CD4-positive, alpha-beta T cell (primary cell): ENCODE measurements at regions of chr6 and their contacts with region 1.

Region 1: GRCh38 chr6:31351401-31352309 is 5.3 kb downstream of the HLA-B start:
- DNase-seq: peak in 6 of 14 experiments; percentile 12 to 78 (median 43)
- ATAC-seq: peak; percentile 43
- H3K4me3 ChIP-seq: no peak overlapping the region
- H3K4me3 Mint-ChIP-seq: peak overlapping the region; percentile 68
- H3K27ac ChIP-seq: peak overlapping the region in 1 of 2 donors; percentile 4
- H3K27ac Mint-ChIP-seq: peak overlapping the region; percentile 100
- H3K4me1 ChIP-seq: peaks cover 48% of the 10 kb centered on the region
- H3K4me1 Mint-ChIP-seq: peaks cover 58% of the 10 kb centered on the region
- H3K27me3 ChIP-seq: no peaks in the 10 kb centered on the region
- H3K27me3 Mint-ChIP-seq: peaks cover 5% of the 10 kb centered on the region
- CTCF ChIP-seq: no peak

Region 2: GRCh38 chr6:31203345-31203979 is 148.2 kb before region 1 on chr6:
- CTCF ChIA-PET with region 1: no interaction called
- POLR2A ChIA-PET with region 1: interaction called, 52 read pairs
- intact Hi-C with region 1: no loop called
- DNase-seq: peak in 12 of 14 experiments; percentile 28 to 87 (median 52)
- ATAC-seq: peak; percentile 71
- H3K4me3 ChIP-seq: peak overlapping the region; percentile 68
- H3K4me3 Mint-ChIP-seq: peak overlapping the region; percentile 87
- H3K27ac ChIP-seq: peak overlapping the region; percentile 71 to 73
- H3K27ac Mint-ChIP-seq: peak overlapping the region; percentile 93
- H3K4me1 ChIP-seq: peaks cover 69% of the 10 kb centered on the region
- H3K4me1 Mint-ChIP-seq: peaks cover 65% of the 10 kb centered on the region
- H3K27me3 ChIP-seq: no peaks in the 10 kb centered on the region
- H3K27me3 Mint-ChIP-seq: no peaks in the 10 kb centered on the region
- CTCF ChIP-seq: no peak

Region 3: DNA sequence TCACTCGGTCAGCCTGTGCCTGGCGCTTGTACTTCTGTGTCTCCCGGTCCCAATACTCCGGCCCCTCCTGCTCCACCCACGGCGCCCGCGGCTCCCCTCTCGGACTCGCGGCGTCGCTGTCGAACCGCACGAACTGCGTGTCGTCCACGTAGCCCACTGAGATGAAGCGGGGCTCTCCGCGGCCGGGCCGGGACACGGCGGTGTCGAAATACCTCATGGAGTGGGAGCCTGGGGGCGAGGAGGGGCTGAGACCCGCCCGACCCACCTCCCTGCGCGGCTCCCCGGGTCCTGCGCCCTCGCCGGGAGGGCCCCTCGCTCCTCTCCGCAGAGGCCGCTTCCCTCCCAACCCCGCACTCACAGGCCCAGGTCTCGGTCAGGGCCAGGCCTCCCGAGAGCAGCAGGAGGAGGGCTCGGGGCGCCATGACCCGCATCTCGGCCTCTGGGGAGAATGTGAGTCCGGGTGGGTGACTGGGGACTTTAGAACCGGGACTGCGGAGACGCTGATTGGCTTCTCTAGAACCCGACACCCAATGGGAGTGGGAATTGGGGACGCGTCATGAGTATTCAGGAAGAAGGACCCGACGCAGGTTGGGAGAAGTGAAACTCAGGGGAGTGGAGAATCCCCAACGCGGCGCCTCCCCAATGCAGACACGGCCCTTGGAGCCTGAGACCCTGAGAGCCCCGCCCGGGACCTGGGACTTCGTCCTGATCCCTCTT is 79.9 kb before region 1 on chr6 and contains the start of gene HLA-C:
- CTCF ChIA-PET with region 1: no interaction called
- POLR2A ChIA-PET with region 1: interaction called, 41 read pairs
- intact Hi-C with region 1: loop called (anchors 1 to 2 kb)
- DNase-seq: peak; percentile 80 to 98 (median 89)
- ATAC-seq: peak; percentile 89
- H3K4me3 ChIP-seq: peak within 1 kb of the TSS; percentile 79
- H3K4me3 Mint-ChIP-seq: peak within 1 kb of the TSS; percentile 98
- H3K27ac ChIP-seq: peak within 1 kb of the TSS; percentile 96 to 98
- H3K27ac Mint-ChIP-seq: peak within 1 kb of the TSS; percentile 100
- H3K4me1 ChIP-seq: peaks cover 54% of the 10 kb centered on the region
- H3K4me1 Mint-ChIP-seq: peaks cover 65% of the 10 kb centered on the region
- H3K27me3 ChIP-seq: no peaks in the 10 kb centered on the region
- H3K27me3 Mint-ChIP-seq: no peaks in the 10 kb centered on the region
- CTCF ChIP-seq: no peak
- total RNA-seq, gene HLA-C: 1,977 to 1,996 TPM

Region 4: DNA sequence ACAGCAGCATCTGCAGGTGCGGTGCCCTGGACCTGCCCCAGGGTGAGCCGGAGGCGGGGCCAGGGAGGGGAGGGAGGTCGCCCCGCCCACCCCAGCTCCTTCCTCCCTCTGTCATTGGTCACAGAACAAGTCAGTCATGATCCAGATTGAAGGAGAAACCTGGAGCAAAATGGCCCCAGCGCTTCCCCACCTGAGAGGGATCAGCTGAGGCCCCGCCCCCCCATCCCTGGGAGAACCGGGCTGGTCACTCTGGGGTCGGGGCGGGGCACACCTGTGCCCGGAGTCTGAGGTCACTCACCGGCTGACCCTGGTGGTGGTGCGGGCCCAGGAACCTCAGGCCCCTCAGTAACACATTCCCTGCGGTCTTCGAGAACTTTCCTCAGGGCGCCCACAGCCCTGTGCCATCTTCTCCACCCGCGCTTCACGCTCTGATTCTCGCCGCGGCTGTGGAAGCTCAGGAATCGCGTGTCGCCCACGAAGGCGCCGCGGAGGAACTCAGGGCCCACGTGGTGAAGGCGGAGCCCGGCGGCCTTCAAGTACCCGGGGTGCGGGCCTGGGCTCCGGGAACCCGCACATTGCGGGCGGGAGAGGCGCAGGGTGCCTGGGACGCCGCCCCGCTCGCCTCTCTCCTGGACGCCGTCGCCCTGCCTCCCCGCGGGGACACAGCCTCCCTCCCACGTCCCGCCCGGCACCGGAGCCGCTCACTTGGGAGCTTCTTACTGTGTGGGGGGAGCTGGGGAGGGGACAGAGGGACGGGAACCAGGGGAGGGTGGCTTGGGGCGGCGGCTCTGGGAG is 43.4 kb before region 1 on chr6:
- CTCF ChIA-PET with region 1: no interaction called
- POLR2A ChIA-PET with region 1: interaction called, 6 read pairs
- intact Hi-C with region 1: loop called in 1 of 2 experiments (anchors 2 kb)
- DNase-seq: peak; percentile 58 to 90 (median 68)
- ATAC-seq: peak; percentile 95
- H3K4me3 ChIP-seq: peak overlapping the region; percentile 73
- H3K4me3 Mint-ChIP-seq: peak overlapping the region; percentile 95
- H3K27ac ChIP-seq: no peak overlapping the region
- H3K27ac Mint-ChIP-seq: peak overlapping the region; percentile 76
- H3K4me1 ChIP-seq: peaks cover 18% of the 10 kb centered on the region
- H3K4me1 Mint-ChIP-seq: no peaks in the 10 kb centered on the region
- H3K27me3 ChIP-seq: peaks cover 0 to 3% of the 10 kb centered on the region in 2 experiments
- H3K27me3 Mint-ChIP-seq: peaks cover 14% of the 10 kb centered on the region
- CTCF ChIP-seq: no peak

Region 5: DNA sequence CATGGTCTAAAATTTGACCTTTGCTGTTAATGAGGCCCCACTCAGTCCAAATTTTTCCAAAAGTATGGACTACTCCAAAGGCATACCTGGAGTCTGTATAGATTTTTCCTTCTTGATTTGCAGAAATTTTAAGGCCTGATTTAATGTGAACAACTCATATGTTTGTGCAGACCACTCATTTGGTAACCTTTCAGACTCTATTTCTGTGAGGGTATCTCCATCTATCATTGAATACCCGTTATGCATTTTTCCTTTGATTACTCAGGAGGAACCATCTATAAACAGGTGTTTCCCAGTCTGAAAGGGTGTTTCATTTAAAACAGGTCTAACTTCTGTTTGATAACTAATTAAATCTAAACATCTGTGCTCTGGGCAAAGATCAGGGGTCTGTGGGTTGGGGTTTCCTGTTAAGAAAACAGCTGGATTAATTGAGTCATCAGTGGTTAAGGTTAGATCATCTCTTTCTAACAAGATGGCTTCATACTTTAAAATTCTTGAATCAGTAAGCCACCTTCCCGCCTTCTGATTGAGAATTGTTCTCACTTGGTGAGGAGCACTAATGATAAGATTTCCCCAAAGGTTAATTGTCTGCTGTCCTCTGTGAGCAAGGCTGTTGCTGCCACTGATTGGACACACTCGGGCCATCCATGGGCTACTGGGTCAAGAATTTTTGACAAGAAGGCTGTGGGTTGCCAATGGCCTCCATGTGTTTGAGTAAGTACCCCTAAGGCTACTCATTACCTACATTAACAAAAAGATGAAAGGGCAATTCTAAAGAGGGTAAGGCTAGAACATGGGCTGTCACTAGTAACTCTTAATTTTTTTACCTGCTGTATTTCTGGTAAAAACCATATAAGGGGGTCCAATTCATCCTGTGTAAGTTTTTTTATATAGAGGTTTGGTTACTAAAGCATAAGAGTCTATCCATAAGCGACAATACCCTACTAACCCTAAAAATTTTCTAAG is 18.7 kb before region 1 on chr6:
- CTCF ChIA-PET with region 1: no interaction called
- POLR2A ChIA-PET with region 1: interaction called, 4 read pairs
- intact Hi-C with region 1: loop called in 1 of 2 experiments (anchors 2 kb)
- DNase-seq: peak in 6 of 14 experiments; percentile 8 to 80 (median 46)
- ATAC-seq: peak; percentile 88
- H3K4me3 ChIP-seq: no peak overlapping the region
- H3K4me3 Mint-ChIP-seq: peak overlapping the region; percentile 0
- H3K27ac ChIP-seq: no peak overlapping the region
- H3K27ac Mint-ChIP-seq: peak overlapping the region; percentile 16
- H3K4me1 ChIP-seq: peaks cover 3% of the 10 kb centered on the region
- H3K4me1 Mint-ChIP-seq: peaks cover 19% of the 10 kb centered on the region
- H3K27me3 ChIP-seq: no peaks in the 10 kb centered on the region
- H3K27me3 Mint-ChIP-seq: no peaks in the 10 kb centered on the region
- CTCF ChIP-seq: no peak

Region 6: GRCh38 chr6:31366693-31367470 is 15.2 kb after region 1 on chr6:
- CTCF ChIA-PET with region 1: interaction called, 8 read pairs
- POLR2A ChIA-PET with region 1: interaction called, 29 read pairs
- intact Hi-C with region 1: no loop called
- DNase-seq: peak; percentile 72 to 96 (median 88)
- ATAC-seq: peak; percentile 97
- H3K4me3 ChIP-seq: peak overlapping the region; percentile 59
- H3K4me3 Mint-ChIP-seq: peak overlapping the region; percentile 81
- H3K27ac ChIP-seq: no peak overlapping the region
- H3K27ac Mint-ChIP-seq: peak overlapping the region; percentile 38
- H3K4me1 ChIP-seq: peaks cover 9% of the 10 kb centered on the region
- H3K4me1 Mint-ChIP-seq: peaks cover 16% of the 10 kb centered on the region
- H3K27me3 ChIP-seq: no peaks in the 10 kb centered on the region
- H3K27me3 Mint-ChIP-seq: peaks cover 32% of the 10 kb centered on the region
- CTCF ChIP-seq: peak; percentile 84

Region 7: DNA sequence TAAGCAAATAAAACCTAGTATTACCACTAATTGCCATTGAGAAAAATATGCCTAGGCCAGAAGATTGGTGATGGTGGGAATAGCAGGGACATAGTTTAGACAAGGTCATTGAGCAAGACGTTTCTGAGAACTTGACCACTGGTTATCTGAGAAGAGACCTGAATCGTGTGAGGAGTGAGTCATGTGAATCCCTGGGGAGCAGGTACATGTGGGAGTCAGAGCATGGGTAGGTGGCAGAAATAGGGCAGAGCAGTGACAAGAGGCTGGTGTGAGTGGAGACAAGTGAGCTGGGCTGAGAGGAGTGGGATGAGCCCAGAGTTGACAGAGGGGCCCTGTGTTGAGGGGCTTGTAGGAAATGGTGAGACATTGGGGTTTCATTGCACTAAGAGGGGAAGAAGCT is 68.2 kb after region 1 on chr6:
- CTCF ChIA-PET with region 1: no interaction called
- POLR2A ChIA-PET with region 1: no interaction called
- intact Hi-C with region 1: no loop called
- DNase-seq: no peak
- ATAC-seq: no peak
- H3K4me3 ChIP-seq: no peak overlapping the region
- H3K4me3 Mint-ChIP-seq: no peak overlapping the region
- H3K27ac ChIP-seq: no peak overlapping the region
- H3K27ac Mint-ChIP-seq: no peak overlapping the region
- H3K4me1 ChIP-seq: no peaks in the 10 kb centered on the region
- H3K4me1 Mint-ChIP-seq: peaks cover 14% of the 10 kb centered on the region
- H3K27me3 ChIP-seq: no peaks in the 10 kb centered on the region
- H3K27me3 Mint-ChIP-seq: no peaks in the 10 kb centered on the region
- CTCF ChIP-seq: no peak

Region 8: GRCh38 chr6:31462964-31463870 is 111.6 kb after region 1 on chr6:
- CTCF ChIA-PET with region 1: no interaction called
- POLR2A ChIA-PET with region 1: no interaction called
- intact Hi-C with region 1: no loop called
- DNase-seq: peak; percentile 81 to 97 (median 87)
- ATAC-seq: peak; percentile 97
- H3K4me3 ChIP-seq: peak overlapping the region; percentile 89
- H3K4me3 Mint-ChIP-seq: peak overlapping the region; percentile 99
- H3K27ac ChIP-seq: peak overlapping the region; percentile 91 to 99
- H3K27ac Mint-ChIP-seq: peak overlapping the region; percentile 96
- H3K4me1 ChIP-seq: peaks cover 58% of the 10 kb centered on the region
- H3K4me1 Mint-ChIP-seq: peaks cover 69% of the 10 kb centered on the region
- H3K27me3 ChIP-seq: no peaks in the 10 kb centered on the region
- H3K27me3 Mint-ChIP-seq: peaks cover 6% of the 10 kb centered on the region
- CTCF ChIP-seq: no peak